Calu3 (cell line): ENCODE measurements at regions of chr9 and their contacts with region 1.

Region 1: GRCh38 chr9:38017149-38017884 is 51.7 kb downstream of the SHB start:
- DNase-seq: peak; percentile 63
- H3K4me3 Mint-ChIP-seq: peak overlapping the region; percentile 19
- H3K27ac Mint-ChIP-seq: no peak overlapping the region
- H3K4me1 Mint-ChIP-seq: peaks cover 19% of the 10 kb centered on the region
- H3K27me3 Mint-ChIP-seq: no peaks in the 10 kb centered on the region
- CTCF ChIP-seq: no peak

Region 2: DNA sequence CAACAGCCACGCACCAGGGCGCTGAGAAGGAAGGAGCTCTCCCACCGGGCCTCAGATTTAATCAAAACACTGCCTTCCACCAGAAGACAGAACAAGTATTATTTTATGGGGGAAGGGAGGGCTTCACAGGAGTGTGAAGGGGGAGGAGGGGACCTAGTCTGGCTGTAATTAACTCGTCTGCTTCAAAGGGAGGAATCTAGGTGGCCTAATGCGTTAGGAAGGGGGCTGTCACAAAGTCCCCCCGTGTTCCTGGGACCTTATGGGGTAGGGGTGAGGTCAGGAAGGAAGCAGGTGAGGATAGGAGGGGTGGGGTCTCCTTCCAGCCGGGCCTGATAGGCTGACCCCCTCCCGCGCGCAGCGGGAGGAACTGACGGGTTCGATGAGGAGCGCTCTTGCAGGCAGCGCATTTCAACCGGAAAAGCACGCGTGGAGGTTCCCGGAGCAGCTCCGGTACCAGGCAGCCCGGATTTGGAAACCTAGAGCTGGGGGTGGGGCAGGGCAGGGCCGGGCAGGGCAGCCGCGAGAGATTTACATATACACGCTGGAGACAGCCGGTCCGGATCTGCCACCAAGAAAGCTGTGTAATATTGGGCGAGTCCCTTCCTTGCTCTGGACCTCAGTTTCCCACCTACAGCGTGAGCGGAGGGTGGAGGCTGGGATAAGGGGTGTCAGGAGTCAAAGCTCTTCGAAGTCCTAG is 49.7 kb after region 1 on chr9:
- CTCF ChIA-PET with region 1: interaction called, 5 read pairs
- intact Hi-C with region 1: loop called (anchors 2 kb)
- DNase-seq: no peak
- H3K4me3 Mint-ChIP-seq: peak overlapping the region; percentile 64
- H3K27ac Mint-ChIP-seq: peak overlapping the region; percentile 52
- H3K4me1 Mint-ChIP-seq: peaks cover 18% of the 10 kb centered on the region
- H3K27me3 Mint-ChIP-seq: no peaks in the 10 kb centered on the region
- CTCF ChIP-seq: no peak